Right lobe of liver (tissue), 6 donors: ENCODE measurements at regions of chr22 and their contacts with region 1.

Region 1: GRCh38 chr22:22884010-22884887 is 3.4 kb upstream of the IGLL5 start:
- DNase-seq: peak in 2 of 3 donors; percentile 43 to 69
- ATAC-seq: peak; percentile 84 to 94 (median 90)
- H3K4me3 ChIP-seq: no peak overlapping the region
- H3K27ac ChIP-seq: no peak overlapping the region
- H3K4me1 ChIP-seq: no peaks in the 10 kb centered on the region
- H3K27me3 ChIP-seq: no peaks in the 10 kb centered on the region
- CTCF ChIP-seq: peak; percentile 72 to 80 (median 74)
- POLR2A ChIP-seq: no peak

Region 2: GRCh38 chr22:22799561-22799960 is 84.7 kb before region 1 on chr22:
- intact Hi-C with region 1: loop called in 1 of 2 experiments (anchors 10 kb)
- DNase-seq: peak in 1 of 3 donors; percentile 27
- ATAC-seq: no peak
- H3K4me3 ChIP-seq: no peak overlapping the region
- H3K27ac ChIP-seq: no peak overlapping the region
- H3K4me1 ChIP-seq: no peaks in the 10 kb centered on the region
- H3K27me3 ChIP-seq: no peaks in the 10 kb centered on the region
- CTCF ChIP-seq: no peak
- POLR2A ChIP-seq: no peak